ENCODE measurements at regions of chr5 and their contacts with region 1.

Region 1: GRCh38 chr5:39080597-39081204 is 6.5 kb upstream of the RICTOR start:
- DNase-seq: peak; percentile 65
- H3K4me3 ChIP-seq: no peak overlapping the region
- H3K27ac ChIP-seq: no peak overlapping the region
- H3K4me1 ChIP-seq: peaks cover 16% of the 10 kb centered on the region
- H3K27me3 ChIP-seq: no peaks in the 10 kb centered on the region
- CTCF ChIP-seq: peak; percentile 79 to 83

Region 2: DNA sequence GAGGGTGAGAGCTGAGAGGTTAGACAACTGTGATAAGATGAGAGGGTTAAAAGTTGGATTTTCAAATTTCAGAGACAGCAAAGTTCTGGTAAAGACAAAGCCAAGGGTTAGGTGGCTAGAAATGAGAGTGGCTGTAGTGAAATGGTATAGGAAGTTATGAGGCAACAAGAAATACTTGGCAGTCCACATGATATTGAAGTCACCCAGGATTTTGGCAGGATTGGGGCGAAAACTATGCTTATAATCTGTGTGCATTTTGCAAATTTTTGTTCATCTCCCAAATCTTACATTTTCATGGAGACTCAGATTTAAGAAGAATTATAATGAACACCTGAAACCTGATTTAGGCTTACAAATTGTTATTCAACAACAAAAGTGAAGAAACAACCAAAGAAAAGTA is 248.0 kb after region 1 on chr5:
- CTCF ChIA-PET with region 1: interaction called, 20 read pairs
- dilution Hi-C with region 1: no loop called
- in situ Hi-C with region 1: no loop called
- intact Hi-C with region 1: no loop called
- DNase-seq: no peak
- H3K4me3 ChIP-seq: no peak overlapping the region
- H3K27ac ChIP-seq: no peak overlapping the region
- H3K4me1 ChIP-seq: no peaks in the 10 kb centered on the region
- H3K27me3 ChIP-seq: no peaks in the 10 kb centered on the region
- CTCF ChIP-seq: no peak

Measured in mammary epithelial cell (primary cell).